SK-N-SH (cell line): ENCODE measurements at regions of chr11 and their contacts with region 1.

Region 1: DNA sequence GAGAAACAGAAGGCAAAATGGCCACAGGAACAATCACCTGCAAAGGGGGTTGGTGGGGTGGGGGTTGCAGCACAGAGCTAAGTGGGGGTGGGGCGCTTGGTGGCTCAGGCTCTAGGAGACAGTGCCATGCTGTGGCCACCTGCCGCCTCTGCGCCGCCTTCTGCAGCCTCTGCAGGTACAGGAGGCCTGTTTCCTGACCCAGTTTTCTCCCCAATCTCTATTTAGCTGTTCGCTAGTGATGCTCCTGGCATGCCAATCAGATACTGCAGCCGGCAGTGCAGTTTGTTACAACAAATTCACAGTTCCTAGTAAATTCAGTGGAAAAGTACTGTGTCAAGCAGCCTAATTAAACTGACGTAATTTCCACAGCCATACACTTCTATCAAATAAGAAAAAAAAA is 106.4 kb downstream of the SERGEF start:
- DNase-seq: peak; percentile 62
- H3K4me3 ChIP-seq: no peak overlapping the region
- H3K27ac ChIP-seq: no peak overlapping the region
- H3K4me1 ChIP-seq: peaks cover 0 to 9% of the 10 kb centered on the region in 2 experiments; a peak in 2 of 4 replicates
- H3K27me3 ChIP-seq: no peaks in the 10 kb centered on the region
- CTCF ChIP-seq: peak; percentile 35
- EP300 ChIP-seq: no peak
- RAD21 ChIP-seq: peak; percentile 71

Region 2: GRCh38 chr11:17827006-17827405 is 79.4 kb before region 1 on chr11:
- CTCF ChIA-PET with region 1: interaction called, 10 read pairs
- POLR2A ChIA-PET with region 1: no interaction called
- DNase-seq: peak; percentile 33
- H3K4me3 ChIP-seq: no peak overlapping the region
- H3K27ac ChIP-seq: no peak overlapping the region; a peak in 1 of 4 replicates
- H3K4me1 ChIP-seq: peaks cover 3 to 5% of the 10 kb centered on the region in 2 experiments; a peak in 2 of 4 replicates
- H3K27me3 ChIP-seq: no peaks in the 10 kb centered on the region
- CTCF ChIP-seq: peak; percentile 37
- EP300 ChIP-seq: no peak
- RAD21 ChIP-seq: peak; percentile 63

Region 3: GRCh38 chr11:17890325-17890724 is 16.1 kb before region 1 on chr11:
- CTCF ChIA-PET with region 1: interaction called, 21 read pairs
- POLR2A ChIA-PET with region 1: no interaction called
- DNase-seq: no peak
- H3K4me3 ChIP-seq: no peak overlapping the region; a peak in 1 of 4 replicates
- H3K27ac ChIP-seq: no peak overlapping the region
- H3K4me1 ChIP-seq: peaks cover 0 to 13% of the 10 kb centered on the region in 2 experiments; a peak in 2 of 4 replicates
- H3K27me3 ChIP-seq: no peaks in the 10 kb centered on the region
- CTCF ChIP-seq: peak; percentile 12; the same call in 1 of the 2 replicates
- EP300 ChIP-seq: no peak
- RAD21 ChIP-seq: 0 out of 2 replicates have a peak, but pooled peaks have one; percentile 6

Region 4: DNA sequence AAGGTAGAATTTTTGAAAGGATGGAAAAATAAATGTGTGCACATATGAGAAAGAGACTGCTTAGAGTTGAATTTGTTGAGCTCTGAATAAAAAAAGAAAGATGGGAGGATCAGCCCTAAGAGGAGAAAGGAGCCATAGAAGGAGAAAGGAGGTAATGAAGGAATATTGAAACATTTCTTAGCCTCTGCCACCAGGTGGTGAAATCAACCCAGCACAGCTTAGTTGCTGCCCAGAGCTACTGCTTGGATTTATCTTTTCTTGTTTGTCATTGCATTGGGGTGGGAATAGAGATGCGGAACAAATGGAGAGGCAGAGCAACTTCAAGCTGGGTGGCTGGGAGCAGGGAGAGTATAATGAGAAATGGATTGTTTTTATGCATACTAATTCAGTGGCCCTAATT is 26.0 kb after region 1 on chr11:
- CTCF ChIA-PET with region 1: interaction called, 11 read pairs
- POLR2A ChIA-PET with region 1: no interaction called
- DNase-seq: no peak
- H3K4me3 ChIP-seq: no peak overlapping the region; a peak in 1 of 4 replicates
- H3K27ac ChIP-seq: no peak overlapping the region
- H3K4me1 ChIP-seq: peaks cover 0 to 3% of the 10 kb centered on the region in 2 experiments; a peak in 3 of 4 replicates
- H3K27me3 ChIP-seq: no peaks in the 10 kb centered on the region
- CTCF ChIP-seq: peak; percentile 13; the same call in 1 of the 2 replicates
- EP300 ChIP-seq: no peak
- RAD21 ChIP-seq: no peak

Region 5: DNA sequence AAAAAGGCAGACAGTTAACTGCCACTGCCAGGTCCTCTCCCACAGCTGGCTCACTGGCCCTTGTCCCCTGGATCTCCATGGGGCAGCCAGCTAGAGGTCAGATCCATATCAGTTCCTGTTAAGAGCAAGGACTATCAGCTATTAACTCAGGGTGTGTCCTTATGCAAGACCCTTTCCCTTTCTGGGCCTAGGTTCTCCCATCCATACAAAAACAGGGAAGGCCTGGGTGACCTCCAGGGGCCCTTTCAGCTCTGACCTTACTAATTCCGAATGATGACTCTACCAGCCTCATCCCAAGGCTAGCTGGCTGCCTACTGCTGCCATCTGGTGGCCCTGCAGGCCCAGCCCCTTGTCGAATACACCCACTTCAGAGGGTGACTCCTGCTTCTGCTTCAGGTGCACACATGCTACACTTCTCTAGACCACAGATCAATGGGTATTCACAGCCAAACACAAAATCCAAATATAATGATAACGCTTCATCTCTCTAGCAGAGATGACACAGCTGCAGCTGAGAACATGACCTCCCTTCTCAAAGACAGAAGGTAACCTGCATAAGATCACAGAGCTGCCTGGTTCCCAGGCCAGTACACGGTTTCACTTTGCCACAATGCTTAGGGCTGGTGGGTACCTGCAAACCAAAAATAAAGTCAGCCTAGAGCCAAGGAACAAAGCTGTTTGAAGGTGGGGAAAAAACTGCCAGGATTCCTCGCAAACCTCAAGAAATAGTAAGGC is 72.3 kb after region 1 on chr11:
- CTCF ChIA-PET with region 1: interaction called, 30 read pairs
- POLR2A ChIA-PET with region 1: no interaction called
- DNase-seq: peak; percentile 61
- H3K4me3 ChIP-seq: no peak overlapping the region; a peak in 1 of 4 replicates
- H3K27ac ChIP-seq: no peak overlapping the region
- H3K4me1 ChIP-seq: peaks cover 0 to 5% of the 10 kb centered on the region in 2 experiments; a peak in 1 of 4 replicates
- H3K27me3 ChIP-seq: no peaks in the 10 kb centered on the region
- CTCF ChIP-seq: peak; percentile 85
- EP300 ChIP-seq: no peak
- RAD21 ChIP-seq: peak; percentile 79

Region 6: DNA sequence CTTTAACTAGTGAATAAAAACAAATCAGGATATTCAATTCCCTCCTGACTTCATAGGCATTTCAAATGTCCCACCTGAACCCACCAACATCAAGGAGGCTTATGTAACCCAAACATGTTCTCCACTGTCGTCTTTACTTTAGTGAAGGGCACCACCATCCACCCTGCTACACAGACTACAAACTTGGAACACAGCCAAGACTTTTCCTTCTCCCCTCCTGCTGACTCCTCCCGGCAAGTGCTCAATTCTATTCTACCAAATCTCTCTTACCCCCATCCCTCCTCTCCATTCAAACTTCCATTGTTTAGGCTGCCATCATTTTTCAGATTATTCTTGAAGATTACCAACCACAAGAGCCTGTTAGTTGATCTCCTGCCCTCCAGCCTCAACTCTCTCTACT is 175.1 kb after region 1 on chr11:
- CTCF ChIA-PET with region 1: no interaction called
- POLR2A ChIA-PET with region 1: no interaction called
- DNase-seq: peak; percentile 8
- H3K4me3 ChIP-seq: no peak overlapping the region
- H3K27ac ChIP-seq: no peak overlapping the region
- H3K4me1 ChIP-seq: no peaks in the 10 kb centered on the region
- H3K27me3 ChIP-seq: no peaks in the 10 kb centered on the region
- CTCF ChIP-seq: no peak
- EP300 ChIP-seq: no peak
- RAD21 ChIP-seq: no peak